CD4-positive, alpha-beta memory T cell (primary cell): ENCODE measurements at regions of chr2 and their contacts with region 1.

Region 1: DNA sequence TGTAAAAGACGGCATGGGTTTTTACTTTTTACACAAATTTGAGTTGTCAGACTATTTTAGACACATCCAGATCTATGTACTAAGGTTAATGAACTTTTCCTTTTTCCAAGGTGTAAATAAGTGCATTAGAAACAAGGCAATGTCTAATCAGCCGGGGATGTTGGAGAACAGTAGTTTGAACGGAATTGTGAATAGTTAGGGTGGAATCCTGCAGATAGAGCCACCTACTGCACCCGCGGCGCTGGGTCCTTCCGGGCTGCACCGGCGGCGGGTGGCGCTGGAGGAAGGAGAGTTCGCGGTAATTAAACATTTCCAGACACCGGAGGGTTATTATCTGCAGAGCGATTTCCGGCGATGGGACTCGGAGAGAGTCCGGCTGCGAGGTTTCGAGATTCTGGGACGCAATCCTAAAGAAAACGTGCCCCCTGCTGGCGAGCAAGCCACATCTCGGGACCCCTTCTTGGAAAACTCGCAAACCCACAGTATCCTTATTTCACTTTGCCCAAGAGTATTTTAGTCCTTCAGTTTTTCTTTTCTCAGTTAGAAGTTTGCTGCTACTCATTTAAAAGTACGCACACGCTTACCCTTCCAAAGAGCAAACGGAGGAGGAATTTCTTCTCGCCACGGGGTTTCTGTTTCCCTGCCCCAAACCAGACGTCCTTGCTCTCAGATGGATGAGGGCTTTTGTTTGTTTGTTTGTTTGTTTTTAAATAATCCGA is 4.5 kb upstream of the OSR1 start:
- DNase-seq: peak in 3 of 5 donors; percentile 42 to 57 (median 43)
- H3K4me3 ChIP-seq: peak overlapping the region; percentile 77 to 87
- H3K4me3 Mint-ChIP-seq: peak overlapping the region; percentile 89 to 98 (median 96)
- H3K27ac ChIP-seq: peak overlapping the region; percentile 15
- H3K27ac Mint-ChIP-seq: peak overlapping the region; percentile 23 to 93 (median 88)
- H3K4me1 ChIP-seq: peaks cover 35% of the 10 kb centered on the region
- H3K4me1 Mint-ChIP-seq: peaks cover 15 to 51% (median 32%) of the 10 kb centered on the region in 4 donors
- H3K27me3 ChIP-seq: peaks cover 34% of the 10 kb centered on the region
- H3K27me3 Mint-ChIP-seq: peaks cover 23 to 33% of the 10 kb centered on the region in 2 donors

Region 2: GRCh38 chr2:18520451-18521425 is 842.2 kb before region 1 on chr2:
- CTCF ChIA-PET with region 1: interaction called, 8 read pairs
- POLR2A ChIA-PET with region 1: interaction called, 3 read pairs
- intact Hi-C with region 1: loop called (anchors 1 kb)
- DNase-seq: peak; percentile 56 to 67 (median 62)
- H3K4me3 ChIP-seq: no peak overlapping the region
- H3K4me3 Mint-ChIP-seq: no peak overlapping the region
- H3K27ac ChIP-seq: no peak overlapping the region
- H3K27ac Mint-ChIP-seq: no peak overlapping the region
- H3K4me1 ChIP-seq: no peaks in the 10 kb centered on the region
- H3K4me1 Mint-ChIP-seq: no peaks in the 10 kb centered on the region
- H3K27me3 ChIP-seq: peaks cover 4% of the 10 kb centered on the region
- H3K27me3 Mint-ChIP-seq: peaks cover 14% of the 10 kb centered on the region in 2 donors

Region 3: DNA sequence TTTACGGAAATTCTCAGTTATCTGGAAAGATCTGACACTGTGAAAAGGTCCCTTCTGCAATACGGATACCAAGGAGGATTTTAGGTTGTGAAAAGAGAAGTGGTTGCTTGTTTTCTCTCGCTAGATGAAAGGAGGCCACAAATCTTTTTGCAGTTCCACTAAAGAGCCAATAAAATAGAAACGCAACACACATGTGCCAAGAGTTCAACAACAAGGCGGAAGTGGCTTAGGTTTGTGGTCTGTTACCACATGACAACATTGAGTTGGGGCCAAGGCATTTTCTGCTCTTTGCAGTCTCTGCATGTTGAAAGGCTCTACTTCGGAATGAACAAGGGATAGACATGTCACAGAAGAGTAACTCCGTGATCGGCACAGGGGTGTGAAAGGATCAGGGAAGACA is 111.2 kb after region 1 on chr2:
- CTCF ChIA-PET with region 1: no interaction called
- POLR2A ChIA-PET with region 1: no interaction called
- intact Hi-C with region 1: loop called (anchors 5 kb)
- DNase-seq: peak; percentile 71 to 80 (median 77)
- H3K4me3 ChIP-seq: peak overlapping the region in 1 of 2 donors; percentile 16
- H3K4me3 Mint-ChIP-seq: peak overlapping the region; percentile 18 to 70 (median 61)
- H3K27ac ChIP-seq: no peak overlapping the region
- H3K27ac Mint-ChIP-seq: peak overlapping the region in 6 of 7 donors; percentile 10 to 59 (median 48)
- H3K4me1 ChIP-seq: peaks cover 24% of the 10 kb centered on the region
- H3K4me1 Mint-ChIP-seq: peaks cover 16 to 26% (median 18%) of the 10 kb centered on the region in 4 donors
- H3K27me3 ChIP-seq: no peaks in the 10 kb centered on the region
- H3K27me3 Mint-ChIP-seq: peaks cover 13 to 18% of the 10 kb centered on the region in 2 donors

Region 4: GRCh38 chr2:19496646-19497045 is 133.7 kb after region 1 on chr2:
- CTCF ChIA-PET with region 1: no interaction called
- POLR2A ChIA-PET with region 1: no interaction called
- intact Hi-C with region 1: no loop called
- DNase-seq: no peak
- H3K4me3 ChIP-seq: no peak overlapping the region
- H3K4me3 Mint-ChIP-seq: no peak overlapping the region
- H3K27ac ChIP-seq: no peak overlapping the region
- H3K27ac Mint-ChIP-seq: no peak overlapping the region
- H3K4me1 ChIP-seq: no peaks in the 10 kb centered on the region
- H3K4me1 Mint-ChIP-seq: no peaks in the 10 kb centered on the region
- H3K27me3 ChIP-seq: no peaks in the 10 kb centered on the region
- H3K27me3 Mint-ChIP-seq: peaks cover 7 to 9% of the 10 kb centered on the region in 2 donors

Region 5: DNA sequence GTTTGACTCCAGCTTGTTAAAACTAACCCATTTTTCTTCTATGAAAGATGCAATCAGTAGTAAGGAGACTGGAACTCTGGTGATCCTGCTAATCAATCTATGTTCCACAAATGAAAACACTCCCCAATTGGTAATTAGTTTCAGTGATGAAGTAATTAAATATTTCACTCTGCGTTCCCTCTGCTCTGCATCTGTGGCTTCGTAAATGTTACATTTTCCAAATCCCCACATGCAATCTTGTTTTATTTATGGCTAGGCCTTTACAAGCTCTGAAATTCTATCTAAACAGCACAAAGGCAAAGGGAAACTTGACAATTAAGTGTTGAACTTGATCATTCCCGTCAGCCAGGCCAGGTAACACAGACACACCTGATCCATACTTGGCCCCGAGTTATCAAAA is 226.9 kb after region 1 on chr2:
- CTCF ChIA-PET with region 1: no interaction called
- POLR2A ChIA-PET with region 1: no interaction called
- intact Hi-C with region 1: loop called (anchors 10 kb)
- DNase-seq: no peak
- H3K4me3 ChIP-seq: no peak overlapping the region
- H3K4me3 Mint-ChIP-seq: no peak overlapping the region
- H3K27ac ChIP-seq: no peak overlapping the region
- H3K27ac Mint-ChIP-seq: no peak overlapping the region
- H3K4me1 ChIP-seq: no peaks in the 10 kb centered on the region
- H3K4me1 Mint-ChIP-seq: no peaks in the 10 kb centered on the region
- H3K27me3 ChIP-seq: no peaks in the 10 kb centered on the region
- H3K27me3 Mint-ChIP-seq: no peaks in the 10 kb centered on the region

Region 6: GRCh38 chr2:19667085-19667484 is 304.2 kb after region 1 on chr2:
- CTCF ChIA-PET with region 1: no interaction called
- POLR2A ChIA-PET with region 1: no interaction called
- intact Hi-C with region 1: loop called (anchors 5 kb)
- DNase-seq: no peak
- H3K4me3 ChIP-seq: no peak overlapping the region
- H3K4me3 Mint-ChIP-seq: no peak overlapping the region
- H3K27ac ChIP-seq: no peak overlapping the region
- H3K27ac Mint-ChIP-seq: no peak overlapping the region
- H3K4me1 ChIP-seq: no peaks in the 10 kb centered on the region
- H3K4me1 Mint-ChIP-seq: no peaks in the 10 kb centered on the region
- H3K27me3 ChIP-seq: no peaks in the 10 kb centered on the region
- H3K27me3 Mint-ChIP-seq: peaks cover 6 to 14% of the 10 kb centered on the region in 2 donors